T-cell (primary cell): ENCODE measurements at regions of chr2 and their contacts with region 1.

Region 1: GRCh38 chr2:203869223-203870042 is 1.9 kb downstream of the CTLA4 start:
- DNase-seq: peak; percentile 45 to 82 (median 68)
- ATAC-seq: peak; percentile 80 to 88 (median 82)
- H3K4me3 ChIP-seq: peak overlapping the region in 1 of 2 donors; percentile 42
- H3K4me3 Mint-ChIP-seq: peak overlapping the region; percentile 80 to 85 (median 84)
- H3K27ac ChIP-seq: peak overlapping the region; percentile 77
- H3K27ac Mint-ChIP-seq: peak overlapping the region; percentile 95 to 97
- H3K4me1 ChIP-seq: peaks cover 49 to 51% of the 10 kb centered on the region in 2 experiments
- H3K4me1 Mint-ChIP-seq: peaks cover 74 to 84% (median 83%) of the 10 kb centered on the region in 3 donors
- H3K27me3 ChIP-seq: no peaks in the 10 kb centered on the region
- H3K27me3 Mint-ChIP-seq: no peaks in the 10 kb centered on the region

Region 2: DNA sequence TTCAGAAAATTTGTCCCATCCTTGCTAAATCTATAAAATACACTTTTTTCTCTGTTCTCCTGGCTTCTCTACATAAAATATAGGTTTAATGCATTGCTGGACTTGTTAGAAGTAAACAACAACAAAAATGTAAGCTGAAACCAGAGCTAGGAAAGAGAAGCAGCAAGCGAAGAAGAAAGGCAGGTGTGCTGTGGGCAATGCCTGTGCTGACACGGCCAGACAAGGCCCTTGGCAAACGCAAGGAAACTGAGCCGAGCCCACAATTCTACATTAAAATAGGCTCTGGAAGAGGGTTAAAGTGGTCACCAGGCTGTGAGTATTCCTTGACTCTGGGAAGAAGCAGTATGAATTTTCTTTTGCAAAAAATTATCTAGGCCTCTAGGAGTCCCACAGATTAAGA is 1067.9 kb before region 1 on chr2:
- CTCF ChIA-PET with region 1: no interaction called
- POLR2A ChIA-PET with region 1: no interaction called
- DNase-seq: no peak
- ATAC-seq: no peak
- H3K4me3 ChIP-seq: no peak overlapping the region
- H3K4me3 Mint-ChIP-seq: no peak overlapping the region
- H3K27ac ChIP-seq: no peak overlapping the region
- H3K27ac Mint-ChIP-seq: no peak overlapping the region
- H3K4me1 ChIP-seq: no peaks in the 10 kb centered on the region
- H3K4me1 Mint-ChIP-seq: no peaks in the 10 kb centered on the region
- H3K27me3 ChIP-seq: no peaks in the 10 kb centered on the region
- H3K27me3 Mint-ChIP-seq: no peaks in the 10 kb centered on the region

Region 3: DNA sequence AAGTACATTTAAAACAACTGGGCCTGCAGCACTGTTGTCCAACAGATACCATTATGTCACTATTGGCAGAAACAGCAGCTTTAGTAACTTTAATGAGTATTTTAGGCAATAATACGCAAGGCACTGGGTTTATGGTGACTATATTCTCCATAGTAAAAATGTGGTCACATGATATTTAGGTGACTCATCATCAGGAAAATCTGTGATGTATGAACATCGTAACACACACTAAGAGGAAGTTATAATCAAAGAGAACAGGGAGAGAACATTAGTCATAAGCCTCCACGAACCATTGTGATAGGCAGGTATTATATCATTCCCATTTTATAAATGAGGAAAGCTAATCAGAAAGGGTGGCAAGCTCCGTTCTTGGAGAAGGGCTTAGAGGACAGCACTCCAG is 371.3 kb before region 1 on chr2:
- CTCF ChIA-PET with region 1: no interaction called
- POLR2A ChIA-PET with region 1: interaction called in 1 of 2 experiments, 10 read pairs
- DNase-seq: no peak
- ATAC-seq: peak in 1 of 4 experiments; percentile 19
- H3K4me3 ChIP-seq: no peak overlapping the region
- H3K4me3 Mint-ChIP-seq: no peak overlapping the region
- H3K27ac ChIP-seq: no peak overlapping the region
- H3K27ac Mint-ChIP-seq: no peak overlapping the region
- H3K4me1 ChIP-seq: peaks cover 0 to 12% of the 10 kb centered on the region in 2 experiments
- H3K4me1 Mint-ChIP-seq: peaks cover 19 to 29% (median 27%) of the 10 kb centered on the region in 3 donors
- H3K27me3 ChIP-seq: no peaks in the 10 kb centered on the region
- H3K27me3 Mint-ChIP-seq: no peaks in the 10 kb centered on the region

Region 4: GRCh38 chr2:203835867-203836800 is 33.3 kb before region 1 on chr2:
- CTCF ChIA-PET with region 1: no interaction called
- POLR2A ChIA-PET with region 1: no interaction called
- DNase-seq: no peak
- ATAC-seq: peak in 3 of 4 experiments; percentile 45 to 61 (median 59)
- H3K4me3 ChIP-seq: no peak overlapping the region
- H3K4me3 Mint-ChIP-seq: no peak overlapping the region
- H3K27ac ChIP-seq: peak overlapping the region; percentile 21
- H3K27ac Mint-ChIP-seq: peak overlapping the region; percentile 35 to 43
- H3K4me1 ChIP-seq: peaks cover 0 to 3% of the 10 kb centered on the region in 2 experiments
- H3K4me1 Mint-ChIP-seq: peaks cover 0 to 5% (median 0%) of the 10 kb centered on the region in 3 donors
- H3K27me3 ChIP-seq: no peaks in the 10 kb centered on the region
- H3K27me3 Mint-ChIP-seq: no peaks in the 10 kb centered on the region

Region 5: GRCh38 chr2:203858176-203858575 is 11.3 kb before region 1 on chr2:
- CTCF ChIA-PET with region 1: interaction called, 3 to 15 read pairs
- POLR2A ChIA-PET with region 1: interaction called, 4 to 10 read pairs
- DNase-seq: peak in 9 of 35 experiments; percentile 3 to 56 (median 23)
- ATAC-seq: peak in 2 of 4 experiments; percentile 48 to 57
- H3K4me3 ChIP-seq: no peak overlapping the region
- H3K4me3 Mint-ChIP-seq: no peak overlapping the region
- H3K27ac ChIP-seq: peak overlapping the region; percentile 1
- H3K27ac Mint-ChIP-seq: peak overlapping the region in 1 of 2 donors; percentile 66
- H3K4me1 ChIP-seq: peaks cover 3 to 17% of the 10 kb centered on the region in 2 experiments
- H3K4me1 Mint-ChIP-seq: peaks cover 58 to 64% (median 61%) of the 10 kb centered on the region in 3 donors
- H3K27me3 ChIP-seq: no peaks in the 10 kb centered on the region
- H3K27me3 Mint-ChIP-seq: no peaks in the 10 kb centered on the region

Region 6: DNA sequence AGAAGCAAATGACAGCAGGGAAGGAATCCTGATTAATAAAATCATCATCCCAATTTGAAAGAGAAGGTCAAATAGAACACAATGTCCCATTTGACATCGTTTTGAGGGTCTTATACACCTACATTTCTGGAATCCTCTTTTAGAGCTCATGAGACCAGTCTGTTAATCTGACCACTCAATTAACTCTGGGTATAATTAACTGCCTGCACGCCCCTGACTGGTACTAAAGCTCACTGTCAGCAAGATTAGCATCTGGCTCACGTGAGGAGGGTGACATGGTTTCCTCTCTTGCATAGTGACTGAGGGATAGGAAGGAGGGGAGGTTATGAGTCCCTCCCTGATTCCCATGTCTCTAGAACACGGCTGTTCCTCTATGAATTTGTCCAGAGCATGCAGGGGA is 191.4 kb after region 1 on chr2:
- CTCF ChIA-PET with region 1: no interaction called
- POLR2A ChIA-PET with region 1: no interaction called
- DNase-seq: no peak
- ATAC-seq: no peak
- H3K4me3 ChIP-seq: no peak overlapping the region
- H3K4me3 Mint-ChIP-seq: no peak overlapping the region
- H3K27ac ChIP-seq: no peak overlapping the region
- H3K27ac Mint-ChIP-seq: no peak overlapping the region
- H3K4me1 ChIP-seq: no peaks in the 10 kb centered on the region
- H3K4me1 Mint-ChIP-seq: no peaks in the 10 kb centered on the region
- H3K27me3 ChIP-seq: no peaks in the 10 kb centered on the region
- H3K27me3 Mint-ChIP-seq: no peaks in the 10 kb centered on the region